HCT116 (cell line): ENCODE measurements at regions of chr10 and their contacts with region 1.

Region 1: GRCh38 chr10:77641788-77642397 is 4.3 kb upstream of the KCNMA1 start:
- DNase-seq: peak; percentile 64
- ATAC-seq: peak; percentile 69
- H3K4me3 ChIP-seq: no peak overlapping the region
- H3K27ac ChIP-seq: no peak overlapping the region
- H3K4me1 ChIP-seq: no peaks in the 10 kb centered on the region
- H3K27me3 ChIP-seq: no peaks in the 10 kb centered on the region
- CTCF ChIP-seq: peak; percentile 60 to 97 (median 89)
- POLR2A ChIP-seq: no peak
- RAD21 ChIP-seq: peak; percentile 99

Region 2: DNA sequence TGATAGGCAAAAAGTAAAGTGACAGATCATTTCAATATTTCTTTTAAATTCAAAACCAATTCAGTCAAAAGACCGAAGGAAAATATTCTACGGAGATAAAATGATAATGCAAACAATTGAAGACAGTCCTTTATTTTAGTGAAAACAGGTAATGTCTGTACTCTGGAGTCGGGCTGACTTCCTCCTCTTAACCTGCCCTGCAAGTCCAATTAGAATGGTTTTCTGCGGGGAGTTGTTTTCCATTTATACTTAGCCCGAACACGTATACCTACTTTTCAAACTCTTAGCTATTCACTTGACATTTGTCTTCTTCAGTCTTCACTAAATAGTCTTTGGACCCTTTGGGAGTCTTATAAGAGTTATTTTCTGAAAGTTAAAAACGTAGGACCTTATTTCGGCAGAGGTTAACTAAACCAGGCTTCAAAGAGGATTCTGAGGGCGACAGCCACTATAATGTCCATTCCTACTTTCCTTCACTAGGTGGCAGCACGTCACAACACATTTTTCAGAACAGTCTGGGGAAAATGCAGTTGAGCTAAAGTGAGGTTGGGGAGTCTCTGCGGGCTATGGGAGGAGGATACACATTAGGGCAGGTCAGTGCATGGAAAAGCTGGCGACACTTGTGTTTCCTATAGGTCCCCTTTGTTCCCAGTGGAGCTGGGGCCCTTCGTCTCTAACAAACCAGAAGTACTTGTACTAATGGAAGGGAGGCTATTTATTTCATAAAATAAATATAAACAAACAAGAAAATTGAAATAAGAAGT is 476.3 kb before region 1 on chr10:
- CTCF ChIA-PET with region 1: interaction called, 34 read pairs
- POLR2A ChIA-PET with region 1: no interaction called
- RAD21 ChIA-PET with region 1: interaction called in 1 of 2 experiments, 4 read pairs
- intact Hi-C with region 1: loop called (anchors 2 kb)
- DNase-seq: peak; percentile 51
- ATAC-seq: peak; percentile 90
- H3K4me3 ChIP-seq: no peak overlapping the region
- H3K27ac ChIP-seq: no peak overlapping the region
- H3K4me1 ChIP-seq: peaks cover 0 to 31% of the 10 kb centered on the region in 2 experiments; a peak in 2 of 4 replicates
- H3K27me3 ChIP-seq: peaks cover 34% of the 10 kb centered on the region
- CTCF ChIP-seq: peak; percentile 72 to 78 (median 73)
- POLR2A ChIP-seq: no peak
- RAD21 ChIP-seq: peak; percentile 86

Region 3: DNA sequence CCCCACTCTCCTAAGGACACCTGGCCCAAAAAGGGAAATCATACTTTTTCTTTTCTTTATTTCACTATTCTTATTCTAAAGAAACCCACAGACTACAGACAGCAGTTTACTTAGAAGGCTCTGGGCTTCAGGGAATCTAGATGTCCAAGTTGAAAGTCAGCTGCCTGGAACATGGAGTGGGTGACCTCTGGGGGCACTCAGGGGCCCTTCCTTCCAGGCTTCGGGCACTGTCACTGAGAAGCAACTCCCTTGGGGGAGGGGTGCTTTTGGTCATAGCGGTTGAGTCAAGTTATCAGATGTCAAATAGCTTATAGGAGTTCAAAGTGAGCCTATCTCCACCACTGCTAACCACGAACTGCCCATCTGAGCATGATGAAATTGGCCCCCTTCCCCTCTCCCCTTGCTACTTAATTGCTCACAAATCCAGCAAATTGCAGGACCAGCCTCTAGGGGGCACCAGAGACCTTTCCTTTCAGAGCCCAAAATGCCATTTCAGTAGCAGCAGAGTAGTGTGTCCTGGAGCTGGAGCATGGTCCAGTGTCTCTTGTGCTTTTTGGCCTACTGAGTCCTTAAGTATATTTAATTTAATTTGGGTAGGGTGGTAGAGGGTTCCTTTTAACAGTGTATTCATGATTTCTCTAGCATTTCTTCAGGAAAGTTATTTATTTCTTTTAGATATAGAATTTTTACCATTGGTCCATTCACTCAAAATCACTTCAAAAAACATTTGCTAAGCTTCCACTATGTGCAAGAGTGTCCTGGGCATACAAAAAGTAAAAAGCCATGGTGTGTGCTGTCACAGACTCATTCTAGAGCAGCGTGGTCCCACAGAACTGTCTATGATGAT is 468.1 kb before region 1 on chr10:
- CTCF ChIA-PET with region 1: interaction called, 45 read pairs
- POLR2A ChIA-PET with region 1: no interaction called
- RAD21 ChIA-PET with region 1: interaction called in 1 of 2 experiments, 4 read pairs
- intact Hi-C with region 1: loop called (anchors 1 kb)
- DNase-seq: peak; percentile 66
- ATAC-seq: peak; percentile 90
- H3K4me3 ChIP-seq: no peak overlapping the region
- H3K27ac ChIP-seq: no peak overlapping the region
- H3K4me1 ChIP-seq: peaks cover 0 to 3% of the 10 kb centered on the region in 2 experiments; a peak in 2 of 4 replicates
- H3K27me3 ChIP-seq: peaks cover 21% of the 10 kb centered on the region; the same call in 1 of the 2 replicates
- CTCF ChIP-seq: peak; percentile 80 to 90 (median 84); a peak in 5 of 6 replicates
- POLR2A ChIP-seq: no peak
- RAD21 ChIP-seq: peak; percentile 90

Region 4: DNA sequence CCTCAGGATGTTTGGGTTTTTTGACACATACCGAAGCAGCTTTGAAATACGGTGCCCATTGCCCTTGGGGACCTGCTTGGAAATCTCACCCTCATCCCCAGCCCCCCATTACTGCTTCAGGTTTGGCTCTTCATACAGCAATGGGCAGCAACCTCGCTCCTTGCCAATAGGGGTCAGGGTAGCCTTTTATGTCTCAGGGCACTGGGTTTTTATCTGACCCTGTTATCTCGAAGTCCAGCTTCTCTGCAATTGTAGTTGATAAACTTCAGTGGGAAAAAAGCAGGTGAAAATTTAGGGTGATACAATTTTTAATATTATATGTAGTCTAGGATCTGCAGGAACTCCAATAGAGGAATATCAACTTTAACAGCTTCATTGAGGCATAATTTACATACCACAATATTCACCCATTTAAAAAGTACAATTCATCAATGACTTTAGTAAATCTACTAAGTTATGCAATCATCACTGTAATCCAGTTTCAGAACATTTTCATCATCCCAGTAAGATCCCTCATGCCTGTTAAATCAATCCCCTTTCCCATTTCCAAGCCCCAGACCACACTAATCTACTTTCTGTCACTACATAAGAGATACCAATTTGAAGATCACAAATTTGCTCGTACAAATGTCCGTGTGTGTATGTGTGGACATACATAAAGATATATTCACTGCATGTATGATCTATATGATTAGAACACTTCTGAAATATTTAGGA is 390.4 kb before region 1 on chr10:
- CTCF ChIA-PET with region 1: interaction called, 12 read pairs
- POLR2A ChIA-PET with region 1: no interaction called
- RAD21 ChIA-PET with region 1: no interaction called
- intact Hi-C with region 1: loop called (anchors 1 kb)
- DNase-seq: peak; percentile 13
- ATAC-seq: peak; percentile 87
- H3K4me3 ChIP-seq: no peak overlapping the region
- H3K27ac ChIP-seq: no peak overlapping the region
- H3K4me1 ChIP-seq: no peaks in the 10 kb centered on the region
- H3K27me3 ChIP-seq: peaks cover 19% of the 10 kb centered on the region; the same call in 1 of the 2 replicates
- CTCF ChIP-seq: peak; percentile 56 to 79 (median 71)
- POLR2A ChIP-seq: no peak
- RAD21 ChIP-seq: peak; percentile 74

Region 5: DNA sequence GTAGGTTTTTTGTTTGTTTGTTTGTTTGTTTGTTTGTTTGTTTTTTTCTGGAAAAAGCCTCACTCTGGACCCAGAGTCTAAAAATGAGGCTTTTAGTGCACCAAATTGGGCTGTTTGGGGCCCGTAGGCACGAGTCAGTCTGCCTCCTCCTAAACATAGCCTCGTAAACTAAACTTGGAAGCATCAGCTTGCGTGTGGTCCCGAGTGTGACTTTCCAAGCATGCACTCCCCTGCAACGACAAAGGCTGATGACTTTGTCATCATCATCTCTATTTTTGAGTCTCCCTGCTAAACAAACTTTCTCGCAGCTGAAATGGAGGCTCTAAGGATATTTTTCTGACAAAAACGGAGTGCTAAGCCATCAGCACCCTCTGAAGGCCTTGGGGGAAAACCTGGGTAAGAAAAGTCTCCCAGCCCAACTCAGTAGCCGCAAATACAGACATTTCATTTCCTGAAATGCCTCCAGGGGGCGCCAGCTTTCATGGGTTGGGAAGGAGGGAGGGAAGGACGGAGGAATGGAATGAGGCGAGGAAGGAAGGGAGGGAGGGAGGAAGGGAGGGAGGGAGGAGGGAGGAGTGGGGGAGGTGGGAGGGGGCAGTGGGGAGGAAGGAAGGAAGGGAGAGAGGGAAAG is 250.2 kb before region 1 on chr10:
- CTCF ChIA-PET with region 1: interaction called, 12 read pairs
- POLR2A ChIA-PET with region 1: no interaction called
- RAD21 ChIA-PET with region 1: interaction called in 1 of 2 experiments, 3 read pairs
- intact Hi-C with region 1: loop called (anchors 1 kb)
- DNase-seq: peak; percentile 74
- ATAC-seq: peak; percentile 88
- H3K4me3 ChIP-seq: no peak overlapping the region
- H3K27ac ChIP-seq: no peak overlapping the region
- H3K4me1 ChIP-seq: peaks cover 6 to 23% of the 10 kb centered on the region in 2 experiments
- H3K27me3 ChIP-seq: peaks cover 12% of the 10 kb centered on the region; the same call in 1 of the 2 replicates
- CTCF ChIP-seq: peak; percentile 70 to 84 (median 82); a peak in 5 of 6 replicates
- POLR2A ChIP-seq: no peak
- RAD21 ChIP-seq: peak; percentile 89

Region 6: DNA sequence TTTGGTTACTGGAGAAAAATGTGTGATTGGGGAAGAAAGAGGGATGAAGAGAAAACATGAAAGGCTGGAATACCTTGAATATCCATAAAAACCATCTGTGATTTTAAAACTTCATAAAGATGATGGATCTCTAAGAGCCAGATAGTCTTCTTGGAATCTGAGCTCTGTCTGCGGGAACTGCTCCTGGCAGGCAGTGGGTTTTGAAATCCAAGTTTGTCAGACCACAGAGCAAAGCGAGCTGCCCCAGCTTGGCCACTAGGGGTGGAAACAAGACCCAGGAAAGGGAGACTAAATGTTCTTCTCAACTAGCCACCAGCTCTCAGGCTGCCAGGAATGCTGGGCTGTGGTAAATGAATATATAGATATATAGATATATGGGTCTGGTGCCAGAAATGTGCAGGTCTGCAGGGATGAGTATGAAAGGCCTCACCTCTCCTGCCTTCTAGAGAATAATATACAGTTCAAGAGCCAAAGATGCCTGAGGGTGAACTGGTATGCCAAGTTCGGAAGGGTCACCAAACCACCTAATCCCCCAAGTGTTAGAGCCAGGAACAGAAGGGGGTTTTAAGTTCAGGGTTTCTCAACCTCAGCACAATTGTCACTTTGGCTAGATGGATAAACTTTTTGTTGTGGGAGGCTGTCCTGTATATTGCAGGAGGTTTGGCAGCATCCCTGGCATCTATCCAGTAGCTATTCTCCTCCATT is 213.1 kb before region 1 on chr10:
- CTCF ChIA-PET with region 1: interaction called, 4 read pairs
- POLR2A ChIA-PET with region 1: no interaction called
- RAD21 ChIA-PET with region 1: no interaction called
- intact Hi-C with region 1: loop called (anchors 1 kb)
- DNase-seq: peak; percentile 24
- ATAC-seq: peak; percentile 92
- H3K4me3 ChIP-seq: no peak overlapping the region
- H3K27ac ChIP-seq: no peak overlapping the region
- H3K4me1 ChIP-seq: no peaks in the 10 kb centered on the region
- H3K27me3 ChIP-seq: no peaks in the 10 kb centered on the region; the same call in 1 of the 2 replicates
- CTCF ChIP-seq: peak; percentile 43 to 78 (median 66); a peak in 5 of 6 replicates
- POLR2A ChIP-seq: no peak
- RAD21 ChIP-seq: peak; percentile 58

Region 7: GRCh38 chr10:77494327-77494726 is 147.6 kb before region 1 on chr10:
- CTCF ChIA-PET with region 1: interaction called, 22 read pairs
- POLR2A ChIA-PET with region 1: no interaction called
- RAD21 ChIA-PET with region 1: interaction called in 1 of 2 experiments, 3 read pairs
- intact Hi-C with region 1: loop called (anchors 1 kb)
- DNase-seq: peak; percentile 32
- ATAC-seq: peak; percentile 82
- H3K4me3 ChIP-seq: no peak overlapping the region
- H3K27ac ChIP-seq: no peak overlapping the region
- H3K4me1 ChIP-seq: no peaks in the 10 kb centered on the region
- H3K27me3 ChIP-seq: no peaks in the 10 kb centered on the region
- CTCF ChIP-seq: peak; percentile 42 to 71 (median 65)
- POLR2A ChIP-seq: no peak
- RAD21 ChIP-seq: peak; percentile 88

Region 8: DNA sequence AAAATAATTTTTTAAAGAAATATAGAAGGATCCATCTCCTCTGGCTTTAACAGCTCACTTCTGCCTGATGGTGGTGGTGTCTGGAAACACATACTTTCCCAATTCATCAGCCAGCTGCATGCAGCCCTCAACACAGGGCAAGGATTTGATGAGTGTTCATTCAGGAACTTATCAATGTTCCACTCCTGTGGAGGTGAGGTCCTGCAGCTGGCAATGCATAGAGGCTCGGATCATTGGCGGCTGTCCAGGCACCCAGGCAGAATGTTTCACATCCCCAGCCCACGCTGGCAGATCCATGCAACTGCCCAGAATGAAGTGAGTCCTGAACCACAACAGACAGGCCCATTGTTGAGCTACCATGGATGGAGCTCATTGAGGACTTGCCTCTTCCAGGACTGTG is 50.9 kb after region 1 on chr10:
- CTCF ChIA-PET with region 1: no interaction called
- POLR2A ChIA-PET with region 1: no interaction called
- RAD21 ChIA-PET with region 1: no interaction called
- intact Hi-C with region 1: no loop called
- DNase-seq: no peak
- ATAC-seq: no peak
- H3K4me3 ChIP-seq: no peak overlapping the region
- H3K27ac ChIP-seq: no peak overlapping the region
- H3K4me1 ChIP-seq: no peaks in the 10 kb centered on the region
- H3K27me3 ChIP-seq: peaks cover 39% of the 10 kb centered on the region
- CTCF ChIP-seq: no peak
- POLR2A ChIP-seq: no peak
- RAD21 ChIP-seq: no peak

Region 9: DNA sequence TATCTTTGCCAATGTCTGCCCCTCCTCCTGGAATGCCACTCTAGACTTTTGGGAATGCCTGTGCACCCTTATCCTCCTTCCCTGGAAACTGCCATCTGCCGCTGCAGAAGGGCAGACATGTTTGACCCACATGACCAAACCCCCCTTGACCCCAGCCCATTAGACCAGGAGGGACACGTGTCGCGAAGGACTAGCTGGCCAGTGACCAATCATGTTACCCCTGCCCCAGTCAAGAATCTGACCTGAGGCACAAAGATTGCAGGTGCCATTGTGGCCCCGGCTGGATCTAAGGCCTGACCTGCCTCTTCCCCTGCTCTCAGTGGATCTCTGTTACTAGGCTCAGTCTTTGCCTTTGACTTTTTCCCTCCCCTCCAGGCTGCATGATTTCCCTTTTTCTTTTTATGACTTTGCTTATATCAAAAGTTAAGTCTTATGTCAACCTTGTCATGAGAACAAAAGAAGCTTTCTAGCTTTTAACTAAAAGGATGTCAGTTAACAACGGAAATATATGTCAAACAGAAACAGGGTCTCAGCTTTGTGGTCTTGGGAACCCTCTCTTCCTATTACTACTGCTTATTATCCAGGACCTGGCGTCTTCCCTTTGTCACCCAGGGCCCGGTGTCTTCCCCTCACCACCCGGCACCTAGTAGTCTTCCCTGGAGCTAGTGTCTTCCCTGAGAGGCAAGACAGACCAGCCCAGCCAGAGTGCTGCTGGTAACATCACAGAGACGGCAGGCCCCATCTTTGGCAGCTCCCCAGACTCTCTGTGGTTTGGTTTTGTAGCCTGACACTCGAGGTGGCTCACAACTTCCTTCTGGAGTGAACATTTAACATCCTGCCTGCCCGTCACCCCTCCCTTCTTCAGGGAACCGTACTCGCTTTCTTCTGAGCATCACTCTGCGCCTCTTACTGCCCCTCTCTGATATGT is 1681.0 kb after region 1 on chr10:
- CTCF ChIA-PET with region 1: no interaction called
- POLR2A ChIA-PET with region 1: no interaction called
- RAD21 ChIA-PET with region 1: no interaction called
- intact Hi-C with region 1: no loop called
- DNase-seq: no peak
- ATAC-seq: peak; percentile 40; the same call in 1 of the 2 replicates
- H3K4me3 ChIP-seq: no peak overlapping the region
- H3K27ac ChIP-seq: no peak overlapping the region
- H3K4me1 ChIP-seq: peaks cover 4 to 19% of the 10 kb centered on the region in 2 experiments
- H3K27me3 ChIP-seq: no peaks in the 10 kb centered on the region
- CTCF ChIP-seq: no peak
- POLR2A ChIP-seq: no peak
- RAD21 ChIP-seq: no peak